Activated T-helper 1 cell treated with anti-CD3 and anti-CD28 coated beads, Interleukin-12 subunit alpha, Interleukin-12 subunit beta, Interleukin-2, Interleukin-4 antibody, amounts not matched to agents 30 ng/mL and 10 ng/mL and 1 ng/mL, durations not matched to agents 14 hours and 24 hours and 36 hours (primary cell): ENCODE measurements at regions of chr7 and their contacts with region 1.

Region 1: DNA sequence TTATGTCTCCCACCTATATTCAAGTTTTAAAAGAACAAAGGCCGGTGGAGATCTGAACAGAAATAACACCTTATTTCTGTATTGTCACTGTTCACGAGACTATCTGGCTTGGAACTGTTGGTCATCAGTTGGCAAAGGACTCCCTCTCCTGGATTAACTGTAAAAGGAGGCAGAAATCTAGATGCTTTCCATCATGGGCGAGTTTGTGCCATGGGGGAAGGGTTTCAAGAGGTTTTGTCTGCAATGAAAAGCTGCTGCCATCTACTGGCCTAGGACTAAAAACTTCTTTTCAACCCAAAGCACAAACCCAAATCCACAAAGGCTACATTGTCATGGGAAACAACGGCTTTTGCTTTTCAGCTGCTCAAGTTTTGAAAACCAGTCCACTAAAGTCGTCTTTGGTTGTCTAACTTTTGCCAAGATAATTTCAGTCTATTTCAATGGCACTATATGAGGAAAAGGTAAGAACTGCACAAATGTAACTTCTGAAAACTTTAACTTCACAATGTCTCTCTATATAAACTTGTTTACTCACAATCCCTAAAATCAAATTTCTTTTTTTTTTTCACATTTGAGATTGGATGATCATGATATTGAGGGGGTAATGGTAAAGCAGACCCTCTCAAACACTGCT is 196.8 kb downstream of the SKAP2 start:
- DNase-seq: peak; percentile 47
- H3K4me3 Mint-ChIP-seq: no peak overlapping the region
- H3K27ac Mint-ChIP-seq: no peak overlapping the region
- H3K4me1 Mint-ChIP-seq: peaks cover 16% of the 10 kb centered on the region
- H3K27me3 Mint-ChIP-seq: peaks cover 39% of the 10 kb centered on the region

Region 2: GRCh38 chr7:24834128-24834798 is 1833.4 kb before region 1 on chr7:
- intact Hi-C with region 1: loop called (anchors 5 kb)
- DNase-seq: no peak
- H3K4me3 Mint-ChIP-seq: no peak overlapping the region
- H3K27ac Mint-ChIP-seq: no peak overlapping the region
- H3K4me1 Mint-ChIP-seq: peaks cover 72% of the 10 kb centered on the region
- H3K27me3 Mint-ChIP-seq: no peaks in the 10 kb centered on the region

Region 3: DNA sequence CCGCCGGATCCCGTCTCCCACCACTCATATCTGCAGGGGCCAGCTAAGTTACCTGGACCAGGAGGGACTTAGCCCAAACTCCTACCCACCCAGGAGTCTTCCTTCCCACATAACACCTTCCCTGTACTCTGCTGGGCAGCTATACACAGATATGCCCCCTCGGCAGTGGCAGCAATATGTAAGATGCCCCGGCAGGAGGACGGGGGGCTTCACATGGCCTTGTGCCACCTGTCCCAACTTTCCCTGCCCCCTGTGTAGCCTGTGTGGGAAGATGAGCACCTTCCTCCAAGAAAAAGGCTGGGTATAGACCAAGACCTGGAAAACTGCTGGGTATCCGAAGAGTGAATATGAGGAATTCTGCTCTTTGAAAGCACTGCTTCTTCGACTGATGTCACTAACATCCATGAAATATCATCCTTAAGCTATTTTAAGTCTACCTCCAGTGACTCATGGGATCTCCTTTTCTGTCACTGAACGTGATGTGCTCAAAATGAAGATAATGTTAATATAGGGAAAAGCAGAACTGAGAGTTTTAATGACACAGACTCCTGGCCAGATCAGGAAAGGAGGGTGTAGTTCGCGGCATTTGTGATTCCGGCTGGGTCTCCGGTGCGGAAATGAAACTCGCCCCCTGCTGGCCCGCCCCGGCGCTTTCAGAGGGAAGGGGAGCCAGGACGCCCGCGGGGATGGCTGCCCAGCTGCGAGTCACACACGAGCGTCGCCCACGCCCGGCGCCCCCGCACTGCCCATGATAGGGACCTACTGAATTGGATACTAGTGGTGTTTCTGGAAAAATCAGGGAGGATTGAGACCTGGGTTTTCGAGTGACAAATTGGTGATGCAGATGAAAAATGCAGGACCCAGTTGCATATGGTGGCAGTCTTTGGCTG is 772.5 kb before region 1 on chr7:
- intact Hi-C with region 1: loop called (anchors 1 kb)
- DNase-seq: peak; percentile 51
- H3K4me3 Mint-ChIP-seq: peak overlapping the region; percentile 3
- H3K27ac Mint-ChIP-seq: no peak overlapping the region
- H3K4me1 Mint-ChIP-seq: peaks cover 33% of the 10 kb centered on the region
- H3K27me3 Mint-ChIP-seq: peaks cover 6% of the 10 kb centered on the region

Region 4: DNA sequence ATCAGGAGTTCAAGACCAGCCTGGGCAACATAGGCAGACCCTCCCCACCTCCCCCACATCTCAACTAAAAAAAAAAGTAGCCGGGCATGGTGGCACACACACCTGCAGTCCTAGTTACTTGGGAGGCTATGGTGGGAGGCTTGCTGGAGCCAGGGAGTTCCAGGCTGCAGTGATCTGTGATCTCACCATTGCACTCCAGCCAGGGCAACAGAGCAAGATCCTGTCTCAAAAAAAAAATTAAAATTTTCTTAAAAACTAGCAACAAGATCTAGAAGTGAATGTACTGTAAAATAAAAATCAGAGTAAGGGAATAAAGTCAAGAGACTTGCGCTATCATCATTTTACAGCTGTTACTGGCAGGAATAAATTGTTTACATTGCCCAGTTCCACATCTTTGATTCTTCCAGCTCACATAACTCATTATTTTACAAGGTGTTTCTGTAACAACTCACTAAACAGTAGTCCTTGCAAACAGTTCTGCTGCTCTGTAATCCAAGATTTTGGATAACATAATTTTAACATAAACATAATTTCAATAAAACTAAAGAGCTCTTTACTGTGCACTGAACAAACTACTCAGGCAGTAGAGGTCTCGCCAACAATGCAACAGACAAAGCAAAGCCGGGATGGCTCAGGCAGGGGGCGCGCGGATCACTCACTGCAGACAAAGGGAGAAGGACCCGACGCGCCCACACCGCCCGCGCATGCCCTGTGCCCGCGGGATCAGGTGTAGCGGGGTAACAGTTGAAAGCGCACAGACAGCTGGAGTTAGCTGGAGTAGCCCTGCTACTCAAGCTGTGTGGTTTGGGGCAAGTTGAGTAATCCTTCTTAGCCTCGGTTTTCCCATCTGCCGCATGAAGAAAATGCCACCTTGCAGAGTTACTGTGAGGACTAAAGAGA is 588.9 kb before region 1 on chr7:
- intact Hi-C with region 1: loop called (anchors 5 kb)
- DNase-seq: peak; percentile 66
- H3K4me3 Mint-ChIP-seq: no peak overlapping the region
- H3K27ac Mint-ChIP-seq: no peak overlapping the region
- H3K4me1 Mint-ChIP-seq: peaks cover 9% of the 10 kb centered on the region
- H3K27me3 Mint-ChIP-seq: peaks cover 76% of the 10 kb centered on the region

Region 5: GRCh38 chr7:26376175-26376917 is 291.3 kb before region 1 on chr7:
- intact Hi-C with region 1: loop called (anchors 1 kb)
- DNase-seq: peak; percentile 20
- H3K4me3 Mint-ChIP-seq: peak overlapping the region; percentile 79
- H3K27ac Mint-ChIP-seq: peak overlapping the region; percentile 79
- H3K4me1 Mint-ChIP-seq: peaks cover 7% of the 10 kb centered on the region
- H3K27me3 Mint-ChIP-seq: peaks cover 30% of the 10 kb centered on the region

Region 6: DNA sequence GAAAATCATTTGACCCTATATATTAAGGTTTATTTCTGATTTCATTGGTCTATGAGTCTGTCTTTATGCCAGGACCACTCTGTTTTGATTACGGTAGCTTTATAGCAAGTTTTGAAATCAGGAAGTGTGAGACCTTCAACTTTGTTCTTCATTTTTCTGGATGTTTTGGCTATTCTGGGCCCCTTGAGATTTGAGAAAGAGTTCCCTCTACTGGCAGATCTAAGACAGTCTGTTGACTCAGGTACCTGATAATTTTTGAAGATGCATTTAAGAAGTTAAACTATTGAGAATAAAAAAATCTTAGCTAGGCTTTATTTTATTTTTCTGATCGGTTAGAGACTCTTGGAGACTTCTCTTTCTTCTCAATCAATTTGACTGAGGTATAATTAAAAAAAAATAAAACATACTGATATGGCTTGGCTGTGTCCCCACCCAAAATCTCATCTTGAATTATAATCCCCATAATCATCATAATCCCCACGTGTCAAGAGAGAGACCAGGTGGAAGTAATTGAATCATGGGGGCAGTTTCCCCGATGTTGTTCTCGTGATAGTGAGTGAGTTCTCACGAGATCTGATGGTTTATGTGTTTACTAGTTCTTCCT is 166.8 kb before region 1 on chr7:
- intact Hi-C with region 1: loop called (anchors 5 kb)
- DNase-seq: no peak
- H3K4me3 Mint-ChIP-seq: no peak overlapping the region
- H3K27ac Mint-ChIP-seq: no peak overlapping the region
- H3K4me1 Mint-ChIP-seq: no peaks in the 10 kb centered on the region
- H3K27me3 Mint-ChIP-seq: peaks cover 13% of the 10 kb centered on the region